ENCODE measurements at regions of chr17 and their contacts with region 1.

Region 1: DNA sequence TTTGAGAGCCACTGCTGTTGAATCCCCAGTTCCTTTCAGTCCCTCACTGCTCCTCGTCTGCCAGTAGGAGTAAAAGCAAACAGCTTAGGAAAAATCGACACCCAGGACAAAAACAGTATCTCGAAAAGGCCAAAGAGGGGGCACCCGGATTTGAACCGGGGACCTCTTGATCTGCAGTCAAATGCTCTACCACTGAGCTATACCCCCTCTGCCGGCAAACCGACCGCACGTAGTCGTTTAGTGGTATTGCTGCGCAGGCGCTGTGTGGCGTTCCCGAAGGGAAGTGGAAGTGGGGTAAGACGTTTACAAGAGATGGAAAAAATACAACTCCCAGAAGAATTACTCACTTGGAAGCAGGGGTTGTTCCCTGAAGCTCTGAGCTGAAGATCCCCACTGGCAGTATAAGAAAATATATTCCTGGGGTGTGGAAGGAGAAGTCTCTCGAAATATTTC is 2.2 kb upstream of the PLXDC1 start:
- DNase-seq: peak; percentile 78
- H3K4me3 ChIP-seq: peak overlapping the region; percentile 62 to 94 (median 85)
- H3K27ac ChIP-seq: peak overlapping the region; percentile 53
- H3K4me1 ChIP-seq: peaks cover 20% of the 10 kb centered on the region
- H3K27me3 ChIP-seq: peaks cover 4% of the 10 kb centered on the region
- CTCF ChIP-seq: no peak

Region 2: GRCh38 chr17:38674749-38675615 is 478.6 kb before region 1 on chr17 and contains the start of gene EPOP:
- CTCF ChIA-PET with region 1: no interaction called
- dilution Hi-C with region 1: no loop called
- in situ Hi-C with region 1: no loop called
- intact Hi-C with region 1: loop called (anchors 1 kb)
- DNase-seq: peak; percentile 78
- H3K4me3 ChIP-seq: peak within 1 kb of the TSS; percentile 49 to 62 (median 53)
- H3K27ac ChIP-seq: peak within 1 kb of the TSS; percentile 19
- H3K4me1 ChIP-seq: peaks cover 17% of the 10 kb centered on the region
- H3K27me3 ChIP-seq: peaks cover 5% of the 10 kb centered on the region
- CTCF ChIP-seq: no peak
- total RNA-seq, gene EPOP: 2.8 to 3.2 TPM

Region 3: GRCh38 chr17:38752119-38752929 is 401.3 kb before region 1 on chr17 and contains the start of gene PSMB3:
- CTCF ChIA-PET with region 1: no interaction called
- dilution Hi-C with region 1: no loop called
- in situ Hi-C with region 1: no loop called
- intact Hi-C with region 1: loop called (anchors 1 kb)
- DNase-seq: peak; percentile 99
- H3K4me3 ChIP-seq: peak within 1 kb of the TSS; percentile 81 to 96 (median 94)
- H3K27ac ChIP-seq: peak within 1 kb of the TSS; percentile 78
- H3K4me1 ChIP-seq: peaks cover 33% of the 10 kb centered on the region
- H3K27me3 ChIP-seq: no peaks in the 10 kb centered on the region
- CTCF ChIP-seq: no peak
- total RNA-seq, gene PSMB3: 150 to 218 TPM

Region 4: GRCh38 chr17:38868817-38869525 is 284.7 kb before region 1 on chr17:
- CTCF ChIA-PET with region 1: interaction called, 12 read pairs
- dilution Hi-C with region 1: no loop called
- in situ Hi-C with region 1: no loop called
- intact Hi-C with region 1: loop called (anchors 1 kb)
- DNase-seq: peak; percentile 84
- H3K4me3 ChIP-seq: peak overlapping the region; percentile 66 to 84 (median 73)
- H3K27ac ChIP-seq: peak overlapping the region; percentile 26
- H3K4me1 ChIP-seq: peaks cover 49% of the 10 kb centered on the region
- H3K27me3 ChIP-seq: no peaks in the 10 kb centered on the region
- CTCF ChIP-seq: peak; percentile 7 to 49

Region 5: GRCh38 chr17:38982858-38983746 is 170.5 kb before region 1 on chr17:
- CTCF ChIA-PET with region 1: interaction called, 95 read pairs
- dilution Hi-C with region 1: no loop called
- in situ Hi-C with region 1: loop called (anchors 5 to 25 kb)
- intact Hi-C with region 1: loop called (anchors 1 kb)
- DNase-seq: peak; percentile 38
- H3K4me3 ChIP-seq: no peak overlapping the region
- H3K27ac ChIP-seq: no peak overlapping the region
- H3K4me1 ChIP-seq: no peaks in the 10 kb centered on the region
- H3K27me3 ChIP-seq: no peaks in the 10 kb centered on the region
- CTCF ChIP-seq: peak; percentile 77 to 85

Region 6: GRCh38 chr17:39069114-39069756 is 84.4 kb before region 1 on chr17:
- CTCF ChIA-PET with region 1: interaction called, 3 read pairs
- dilution Hi-C with region 1: no loop called
- in situ Hi-C with region 1: no loop called
- intact Hi-C with region 1: loop called (anchors 1 kb)
- DNase-seq: peak; percentile 32
- H3K4me3 ChIP-seq: no peak overlapping the region
- H3K27ac ChIP-seq: no peak overlapping the region
- H3K4me1 ChIP-seq: peaks cover 19% of the 10 kb centered on the region
- H3K27me3 ChIP-seq: no peaks in the 10 kb centered on the region
- CTCF ChIP-seq: peak; percentile 70 to 75

Region 7: DNA sequence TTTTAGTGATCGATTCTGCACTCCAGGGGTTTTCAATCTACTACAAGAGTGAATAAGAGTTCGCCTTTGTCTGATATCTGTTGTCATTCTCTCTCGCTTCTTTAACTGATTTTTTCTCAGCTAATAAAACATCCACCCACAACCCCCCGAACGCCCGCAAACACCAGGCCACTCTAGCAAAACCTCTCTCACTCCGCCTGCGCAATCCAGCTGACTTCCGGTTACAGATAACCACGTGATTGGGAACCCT is 46.1 kb after region 1 on chr17:
- CTCF ChIA-PET with region 1: no interaction called
- dilution Hi-C with region 1: no loop called
- in situ Hi-C with region 1: no loop called
- intact Hi-C with region 1: loop called (anchors 2 kb)
- DNase-seq: peak; percentile 85
- H3K4me3 ChIP-seq: peak overlapping the region; percentile 72 to 91 (median 84)
- H3K27ac ChIP-seq: peak overlapping the region; percentile 100
- H3K4me1 ChIP-seq: peaks cover 33% of the 10 kb centered on the region
- H3K27me3 ChIP-seq: no peaks in the 10 kb centered on the region
- CTCF ChIP-seq: no peak

Region 8: DNA sequence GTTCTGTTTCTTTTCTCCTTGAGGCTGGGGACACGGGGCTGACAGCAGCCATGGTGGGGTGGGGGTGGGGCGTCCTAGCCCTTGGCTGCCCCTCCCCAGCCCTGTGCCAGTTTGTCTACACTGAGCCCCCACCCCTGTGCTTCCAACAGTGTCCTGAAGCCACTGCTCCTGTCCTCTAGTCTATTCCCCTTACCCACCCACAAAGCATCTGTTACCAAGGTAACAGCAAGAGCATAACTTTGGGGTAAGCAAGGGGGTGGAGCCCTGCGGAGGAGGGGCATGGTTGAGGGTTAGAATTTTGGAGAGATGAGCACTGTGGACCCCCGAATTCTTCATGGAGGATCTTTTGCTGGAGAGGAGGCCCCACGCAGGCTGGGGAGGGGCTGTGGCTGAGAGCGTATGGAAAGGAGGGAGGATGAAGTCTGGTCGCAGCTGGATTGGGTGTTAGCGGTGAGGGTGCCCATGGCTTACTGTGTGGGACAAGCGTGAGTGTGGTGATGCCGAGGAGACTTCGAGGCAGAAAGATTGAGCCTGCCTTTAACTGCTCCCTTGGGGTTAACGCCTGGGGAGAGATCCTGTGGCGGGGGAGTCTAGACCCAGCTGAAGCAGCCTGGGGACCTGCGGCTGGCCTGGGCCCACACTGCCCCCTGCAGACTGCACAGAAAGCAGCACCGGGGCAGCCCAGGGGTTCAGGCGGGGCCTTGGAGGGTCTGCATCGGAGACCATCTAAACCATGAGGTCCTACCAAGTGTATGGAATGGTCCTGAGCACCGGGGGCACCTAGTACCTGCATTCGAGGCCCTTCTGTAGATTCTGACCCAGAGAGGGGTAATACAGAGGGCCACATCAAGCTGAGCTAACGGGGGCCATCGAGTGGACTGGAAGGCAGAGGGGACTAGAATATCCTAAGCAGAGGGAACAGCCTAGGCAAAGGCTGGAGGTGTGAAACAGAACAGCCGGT is 78.2 kb after region 1 on chr17:
- CTCF ChIA-PET with region 1: no interaction called
- dilution Hi-C with region 1: no loop called
- in situ Hi-C with region 1: no loop called
- intact Hi-C with region 1: no loop called
- DNase-seq: no peak
- H3K4me3 ChIP-seq: no peak overlapping the region
- H3K27ac ChIP-seq: no peak overlapping the region
- H3K4me1 ChIP-seq: peaks cover 7% of the 10 kb centered on the region
- H3K27me3 ChIP-seq: no peaks in the 10 kb centered on the region
- CTCF ChIP-seq: peak; percentile 54 to 76

Region 9: GRCh38 chr17:39294060-39294459 is 140.4 kb after region 1 on chr17:
- CTCF ChIA-PET with region 1: no interaction called
- dilution Hi-C with region 1: no loop called
- in situ Hi-C with region 1: no loop called
- intact Hi-C with region 1: no loop called
- DNase-seq: no peak
- H3K4me3 ChIP-seq: no peak overlapping the region
- H3K27ac ChIP-seq: no peak overlapping the region
- H3K4me1 ChIP-seq: no peaks in the 10 kb centered on the region
- H3K27me3 ChIP-seq: no peaks in the 10 kb centered on the region
- CTCF ChIP-seq: no peak

Measured in mammary epithelial cell (primary cell).